ENCODE measurements at regions of chr15 and their contacts with region 1.

Region 1: DNA sequence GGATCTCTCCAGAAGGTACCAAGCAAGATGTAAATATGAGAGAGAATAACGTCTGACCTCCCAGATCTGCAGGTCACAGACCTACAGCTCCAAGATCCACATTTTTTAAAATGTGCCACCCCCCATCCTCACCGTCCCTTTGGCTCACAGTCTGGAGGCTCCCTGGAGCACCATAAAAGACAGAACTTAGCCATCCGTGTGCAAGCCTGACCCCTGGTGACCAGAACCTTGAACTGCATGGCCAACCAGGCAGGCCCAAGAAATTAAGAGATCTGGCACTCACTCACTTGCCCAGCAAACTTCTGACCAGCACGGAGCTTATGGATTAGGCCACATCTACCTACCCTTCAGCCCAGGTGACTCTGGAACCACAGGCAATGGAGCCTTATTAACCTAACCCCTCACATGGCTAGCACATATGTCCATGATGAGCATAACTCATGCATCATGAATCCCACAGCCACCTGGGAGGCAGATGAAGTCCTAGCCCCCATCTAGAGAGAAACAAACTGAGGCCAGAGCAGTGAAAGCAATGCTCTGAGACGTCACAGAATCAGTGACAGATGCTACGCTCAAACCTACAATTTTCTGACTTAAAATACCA is 275.3 kb downstream of the UACA start:
- H3K4me3 Mint-ChIP-seq: no peak overlapping the region
- H3K27ac Mint-ChIP-seq: peak overlapping the region; percentile 99
- H3K4me1 Mint-ChIP-seq: peaks cover 97% of the 10 kb centered on the region
- H3K27me3 Mint-ChIP-seq: peaks cover 36% of the 10 kb centered on the region

Region 2: DNA sequence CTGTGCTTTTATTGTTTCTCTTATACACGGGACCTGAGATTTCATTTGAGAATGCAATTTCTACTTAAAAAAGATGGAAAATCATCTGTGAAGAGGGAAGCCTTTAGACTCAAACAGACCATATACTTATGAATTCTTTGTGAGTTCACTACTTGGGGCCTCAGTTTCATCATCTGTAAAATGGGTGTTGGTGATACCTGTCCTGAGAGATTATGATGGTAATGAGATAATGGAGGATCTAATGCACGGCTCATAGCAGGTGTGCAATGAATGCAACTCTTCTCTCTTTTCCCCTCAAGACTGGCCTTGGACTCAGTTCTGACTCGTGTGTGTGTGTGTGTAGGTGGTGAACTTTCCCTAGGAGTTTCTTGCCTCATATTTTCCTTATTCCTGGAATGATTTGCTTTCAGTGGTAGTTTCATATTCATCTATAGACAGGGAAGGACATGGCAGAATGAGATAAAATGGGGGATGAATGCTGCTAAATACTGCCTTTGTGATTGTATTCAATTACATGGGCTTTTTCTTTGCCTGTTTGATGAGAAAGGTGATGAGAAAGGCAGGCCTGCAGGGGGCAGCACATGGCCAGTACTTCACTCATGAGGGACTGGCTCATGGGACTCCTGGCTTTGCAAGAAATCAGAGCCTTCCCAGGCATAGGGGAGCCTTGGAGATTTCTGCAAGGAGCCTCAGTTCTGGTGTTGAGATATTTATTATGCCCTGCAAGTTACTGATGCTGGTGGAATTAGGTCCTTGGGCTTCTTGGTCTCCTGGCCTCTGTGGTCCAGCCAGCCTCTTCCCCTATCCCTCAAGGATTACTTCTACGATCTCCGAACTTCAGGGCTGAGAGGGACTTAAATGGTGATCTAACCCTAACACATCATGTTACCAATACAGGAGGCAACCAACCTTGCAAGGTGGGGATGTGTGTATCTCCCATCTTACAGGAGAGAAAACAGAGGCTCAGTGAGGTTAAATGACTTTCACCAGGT is 964.8 kb before region 1 on chr15:
- intact Hi-C with region 1: loop called (anchors 1 kb)
- H3K4me3 Mint-ChIP-seq: no peak overlapping the region
- H3K27ac Mint-ChIP-seq: no peak overlapping the region
- H3K4me1 Mint-ChIP-seq: no peaks in the 10 kb centered on the region
- H3K27me3 Mint-ChIP-seq: peaks cover 8% of the 10 kb centered on the region

Region 3: DNA sequence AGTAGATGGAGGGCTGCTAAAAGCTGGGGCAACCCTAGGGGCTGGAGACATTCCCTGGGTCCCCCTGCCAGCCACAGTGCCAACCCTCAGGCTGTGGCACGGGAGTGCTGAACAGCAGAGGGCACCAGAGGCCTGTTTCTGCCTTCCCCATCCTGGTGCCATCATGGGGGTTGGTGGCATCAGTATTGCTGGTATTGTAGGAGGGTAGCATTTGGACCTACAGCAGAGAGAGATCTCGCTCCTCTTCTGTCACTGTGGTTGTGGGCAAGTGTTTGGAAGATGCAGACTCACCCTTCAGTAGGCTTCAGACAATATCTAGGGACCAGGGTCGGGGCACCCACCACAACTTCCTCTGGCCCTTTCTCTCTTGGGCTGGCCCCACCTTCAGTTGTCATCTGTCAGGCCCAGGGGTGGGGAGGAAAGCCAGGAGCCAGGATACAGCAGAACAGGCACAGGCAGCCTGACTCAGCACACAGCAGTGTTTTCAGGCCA is 912.0 kb before region 1 on chr15:
- intact Hi-C with region 1: loop called (anchors 5 kb)
- H3K4me3 Mint-ChIP-seq: no peak overlapping the region
- H3K27ac Mint-ChIP-seq: peak overlapping the region; percentile 63
- H3K4me1 Mint-ChIP-seq: peaks cover 52% of the 10 kb centered on the region
- H3K27me3 Mint-ChIP-seq: peaks cover 32% of the 10 kb centered on the region

Region 4: DNA sequence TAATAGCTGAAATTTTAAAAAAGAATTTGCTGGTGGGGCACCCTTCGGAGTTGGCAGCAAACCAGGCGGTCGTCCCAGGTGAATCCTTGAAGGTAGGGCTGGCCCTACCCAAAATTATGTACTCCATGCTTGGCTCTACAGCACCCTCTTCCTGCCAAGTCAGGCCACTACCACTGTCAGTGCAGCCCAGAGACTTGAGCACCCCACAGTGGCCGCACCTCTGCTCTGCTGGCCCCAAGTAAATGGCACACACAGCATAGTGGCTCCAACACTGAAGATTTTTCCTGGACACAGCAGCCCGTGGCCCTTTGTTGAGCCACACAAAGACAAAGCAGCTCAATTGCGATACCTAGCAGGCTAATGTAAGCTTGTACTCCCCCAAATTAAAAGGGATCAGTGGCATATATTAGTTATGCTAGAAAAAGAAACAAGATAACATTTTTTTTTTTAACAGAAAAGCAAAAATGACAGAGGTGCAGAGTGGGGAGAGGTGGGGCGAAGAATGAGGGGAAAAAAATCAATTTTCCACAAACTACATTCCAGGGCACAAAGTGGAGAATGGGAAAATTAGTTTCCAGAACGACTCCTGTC is 24.8 kb after region 1 on chr15:
- intact Hi-C with region 1: loop called (anchors 1 kb)
- H3K4me3 Mint-ChIP-seq: no peak overlapping the region
- H3K27ac Mint-ChIP-seq: no peak overlapping the region
- H3K4me1 Mint-ChIP-seq: peaks cover 50% of the 10 kb centered on the region
- H3K27me3 Mint-ChIP-seq: peaks cover 28% of the 10 kb centered on the region

Measured in dendritic cell treated with granulocyte-macrophage colony-stimulating factor and Interleukin-4, amounts not matched to agents 40 ng/mL and 50 ng/mL, for 4 days (primary cell).